ENCODE measurements at regions of chr17 and their contacts with region 1.

Region 1: GRCh38 chr17:7014261-7014994 is 2.0 kb downstream of the RNASEK start:
- DNase-seq: peak; percentile 99
- ATAC-seq: peak; percentile 88
- H3K4me3 Mint-ChIP-seq: peak overlapping the region; percentile 92
- H3K27ac Mint-ChIP-seq: peak overlapping the region; percentile 99
- H3K4me1 Mint-ChIP-seq: peaks cover 54% of the 10 kb centered on the region
- H3K27me3 Mint-ChIP-seq: no peaks in the 10 kb centered on the region

Region 2: DNA sequence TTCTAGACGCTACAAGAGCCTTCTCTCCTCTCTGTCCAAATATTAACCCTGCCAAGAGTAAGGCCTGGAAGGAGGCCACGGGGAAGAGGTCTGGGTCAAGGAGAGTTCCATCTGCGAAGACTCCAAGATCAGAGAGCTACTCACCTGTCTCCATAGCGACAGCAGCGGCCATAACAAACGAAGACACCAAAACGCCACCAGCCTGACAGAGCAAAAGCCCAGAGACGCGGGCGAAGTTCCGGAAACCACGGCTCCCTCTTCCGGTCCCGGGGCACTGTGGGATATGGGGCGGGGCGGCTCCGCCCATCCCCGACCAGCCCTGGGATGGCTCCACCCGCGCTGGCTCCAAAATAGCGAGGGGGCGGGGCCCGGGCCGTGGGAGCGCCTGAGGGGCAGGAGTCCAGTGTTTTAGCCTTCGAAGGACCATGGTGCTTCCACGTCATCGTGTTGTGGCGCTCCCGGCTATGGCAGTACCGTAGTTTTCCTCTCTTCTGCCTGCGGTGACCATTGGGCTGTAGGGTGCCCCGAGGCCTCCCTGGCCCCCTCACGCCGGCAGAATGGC is 363.0 kb before region 1 on chr17 and contains the starts of genes C17orf100 and MED31:
- CTCF ChIA-PET with region 1: no interaction called
- POLR2A ChIA-PET with region 1: interaction called, 3 read pairs
- intact Hi-C with region 1: loop called (anchors 1 to 5 kb)
- DNase-seq: peak; percentile 97
- ATAC-seq: peak; percentile 95
- H3K4me3 Mint-ChIP-seq: peak within 1 kb of the TSS; percentile 98
- H3K27ac Mint-ChIP-seq: peak within 1 kb of the TSS; percentile 99
- H3K4me1 Mint-ChIP-seq: peaks cover 55% of the 10 kb centered on the region
- H3K27me3 Mint-ChIP-seq: peaks cover 2% of the 10 kb centered on the region
- total RNA-seq, gene C17orf100: 1.6 to 2.0 TPM
- total RNA-seq, gene MED31: 17.7 to 24.5 TPM

Region 3: DNA sequence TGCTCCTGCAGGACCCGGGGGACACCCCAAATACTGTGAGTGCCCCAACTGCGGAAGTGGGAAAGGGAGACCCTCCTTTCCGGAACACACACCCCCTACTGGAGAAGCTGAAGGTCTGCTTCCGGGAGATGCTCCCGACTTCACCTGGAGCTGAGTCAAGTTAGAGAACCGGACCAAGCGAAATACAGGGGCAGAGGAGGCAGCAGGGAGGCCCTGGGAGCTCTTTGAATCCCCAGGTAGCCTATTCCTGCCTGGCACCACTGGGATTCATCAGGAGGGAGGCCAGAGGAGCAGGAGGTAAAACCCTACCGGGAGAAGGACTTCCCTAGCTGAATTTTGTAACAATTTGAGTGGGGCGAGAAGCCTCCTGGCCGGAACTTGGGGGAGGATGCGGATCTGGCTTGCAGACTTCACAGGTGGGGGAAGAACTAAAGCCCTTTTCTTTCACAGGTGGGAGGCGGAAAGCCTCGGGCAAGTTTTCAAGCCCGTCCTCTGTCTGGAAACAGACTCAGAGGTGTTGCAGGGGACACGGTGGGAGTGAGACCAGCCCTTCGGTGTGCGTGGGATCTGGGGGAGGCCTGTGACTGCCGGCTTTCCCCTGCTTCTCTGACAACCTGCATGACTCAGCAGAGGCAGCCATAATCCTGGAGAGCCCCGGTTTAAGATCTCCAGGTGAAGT is 160.5 kb before region 1 on chr17:
- CTCF ChIA-PET with region 1: no interaction called
- POLR2A ChIA-PET with region 1: no interaction called
- intact Hi-C with region 1: loop called in 1 of 2 experiments (anchors 5 kb)
- DNase-seq: peak; percentile 50
- ATAC-seq: peak; percentile 47
- H3K4me3 Mint-ChIP-seq: peak overlapping the region; percentile 68
- H3K27ac Mint-ChIP-seq: peak overlapping the region; percentile 59
- H3K4me1 Mint-ChIP-seq: peaks cover 12% of the 10 kb centered on the region
- H3K27me3 Mint-ChIP-seq: no peaks in the 10 kb centered on the region

Region 4: DNA sequence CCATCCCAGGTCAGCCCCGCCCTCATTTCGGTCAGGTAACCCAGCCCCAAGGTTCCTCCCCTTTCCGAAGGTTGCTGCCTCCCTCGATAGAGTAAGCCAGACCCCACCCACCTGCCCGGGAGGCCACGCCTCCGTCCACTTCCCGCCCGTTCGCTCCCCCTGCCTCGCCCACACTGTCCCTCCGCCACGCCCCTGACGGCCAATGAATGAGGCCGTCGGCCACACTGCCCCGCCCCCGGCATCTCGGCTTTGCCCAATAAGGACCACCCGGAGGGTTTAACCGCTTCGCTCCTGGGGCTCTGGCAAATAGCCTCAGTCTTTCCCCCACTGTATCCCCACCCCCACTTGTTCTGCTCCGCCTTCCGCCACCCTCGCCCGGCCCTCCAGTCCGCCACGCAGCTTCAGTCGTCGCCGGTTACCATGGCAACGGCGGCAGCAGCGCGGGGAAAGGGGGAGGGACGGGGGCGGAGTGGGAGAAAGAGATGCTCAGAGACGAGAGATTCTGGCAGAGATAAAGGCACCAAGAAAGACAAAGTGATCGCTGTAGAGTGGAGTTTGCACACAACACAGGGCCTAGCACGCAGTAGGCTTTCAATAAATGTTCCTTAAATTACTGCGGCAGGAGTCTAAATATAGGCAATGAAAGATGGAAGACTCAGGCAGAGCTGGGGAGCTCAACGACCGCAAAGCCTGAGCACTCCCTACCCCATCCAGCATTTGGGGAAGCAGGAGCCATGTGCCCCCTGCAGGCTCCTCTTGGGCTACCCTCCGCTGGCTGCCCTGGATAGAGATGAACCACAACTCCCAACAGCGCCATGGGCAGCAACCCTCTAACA is 200.1 kb after region 1 on chr17:
- CTCF ChIA-PET with region 1: no interaction called
- POLR2A ChIA-PET with region 1: no interaction called
- intact Hi-C with region 1: loop called in 1 of 2 experiments (anchors 1 kb)
- DNase-seq: peak; percentile 100
- ATAC-seq: peak; percentile 82
- H3K4me3 Mint-ChIP-seq: peak overlapping the region; percentile 81
- H3K27ac Mint-ChIP-seq: peak overlapping the region; percentile 93
- H3K4me1 Mint-ChIP-seq: peaks cover 71% of the 10 kb centered on the region
- H3K27me3 Mint-ChIP-seq: peaks cover 7% of the 10 kb centered on the region

Region 5: GRCh38 chr17:7306911-7307686 is 292.7 kb after region 1 on chr17 and contains the start of gene EIF5A:
- CTCF ChIA-PET with region 1: no interaction called
- POLR2A ChIA-PET with region 1: no interaction called
- intact Hi-C with region 1: loop called in 1 of 2 experiments (anchors 1 kb)
- DNase-seq: peak; percentile 100
- ATAC-seq: peak; percentile 86
- H3K4me3 Mint-ChIP-seq: peak within 1 kb of the TSS; percentile 96
- H3K27ac Mint-ChIP-seq: peak within 1 kb of the TSS; percentile 100
- H3K4me1 Mint-ChIP-seq: peaks cover 36% of the 10 kb centered on the region
- H3K27me3 Mint-ChIP-seq: no peaks in the 10 kb centered on the region
- total RNA-seq, gene EIF5A: 780 to 934 TPM